HCT116 (cell line): ENCODE measurements at regions of chr4 and their contacts with region 1.

Region 1: GRCh38 chr4:128863312-128864075 is 54.0 kb downstream of the JADE1 start:
- DNase-seq: peak; percentile 42
- ATAC-seq: peak; percentile 92
- H3K4me3 ChIP-seq: no peak overlapping the region
- H3K27ac ChIP-seq: no peak overlapping the region
- H3K4me1 ChIP-seq: no peaks in the 10 kb centered on the region
- H3K27me3 ChIP-seq: no peaks in the 10 kb centered on the region
- CTCF ChIP-seq: peak; percentile 80 to 87 (median 85)
- POLR2A ChIP-seq: no peak
- RAD21 ChIP-seq: peak; percentile 71

Region 2: DNA sequence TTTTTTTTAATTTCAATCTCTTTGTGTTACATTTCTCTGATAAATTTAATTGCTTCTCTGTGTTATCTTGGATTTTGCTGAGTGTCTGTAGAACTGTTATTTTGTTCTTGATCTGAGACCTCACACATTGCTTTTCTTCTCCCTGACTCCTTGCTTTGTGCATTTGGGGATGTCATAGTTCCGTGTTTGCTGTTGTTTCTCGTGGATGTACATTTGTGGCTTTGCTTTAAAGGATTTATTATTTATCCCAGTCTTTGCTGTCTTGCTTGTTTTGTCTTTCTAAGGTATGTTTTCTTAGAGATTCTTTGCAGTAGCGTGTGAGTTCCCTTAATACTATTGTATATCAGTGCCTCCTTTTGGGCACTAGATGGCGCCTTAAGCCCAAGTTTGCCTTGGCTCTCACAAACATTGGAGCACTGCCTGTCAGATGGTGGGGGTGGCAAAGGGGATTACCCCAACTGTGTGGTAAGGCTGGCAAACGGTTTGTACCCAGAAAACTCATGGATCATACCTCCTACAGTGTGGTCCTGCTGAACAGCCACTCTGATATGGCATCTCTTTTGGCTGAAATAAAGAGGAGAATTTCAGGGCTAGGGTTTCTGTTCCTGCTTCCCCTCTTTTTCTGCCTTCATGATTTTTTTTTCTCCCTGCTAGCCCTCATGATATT is 672.2 kb before region 1 on chr4:
- CTCF ChIA-PET with region 1: interaction called, 3 read pairs
- POLR2A ChIA-PET with region 1: no interaction called
- RAD21 ChIA-PET with region 1: no interaction called
- intact Hi-C with region 1: loop called (anchors 1 kb)
- DNase-seq: peak; percentile 37
- ATAC-seq: peak; percentile 97
- H3K4me3 ChIP-seq: no peak overlapping the region
- H3K27ac ChIP-seq: no peak overlapping the region
- H3K4me1 ChIP-seq: no peaks in the 10 kb centered on the region
- H3K27me3 ChIP-seq: no peaks in the 10 kb centered on the region
- CTCF ChIP-seq: peak; percentile 69 to 94 (median 84)
- POLR2A ChIP-seq: no peak
- RAD21 ChIP-seq: peak; percentile 85

Region 3: GRCh38 chr4:128454281-128455075 is 409.0 kb before region 1 on chr4:
- CTCF ChIA-PET with region 1: interaction called, 6 read pairs
- POLR2A ChIA-PET with region 1: no interaction called
- RAD21 ChIA-PET with region 1: no interaction called
- intact Hi-C with region 1: loop called (anchors 1 kb)
- DNase-seq: peak; percentile 75
- ATAC-seq: peak; percentile 100
- H3K4me3 ChIP-seq: no peak overlapping the region
- H3K27ac ChIP-seq: no peak overlapping the region
- H3K4me1 ChIP-seq: no peaks in the 10 kb centered on the region
- H3K27me3 ChIP-seq: no peaks in the 10 kb centered on the region; the same call in 1 of the 2 replicates
- CTCF ChIP-seq: peak; percentile 60 to 84 (median 81); a peak in 5 of 6 replicates
- POLR2A ChIP-seq: no peak
- RAD21 ChIP-seq: peak; percentile 89

Region 4: GRCh38 chr4:128565565-128566186 is 297.8 kb before region 1 on chr4:
- CTCF ChIA-PET with region 1: no interaction called
- POLR2A ChIA-PET with region 1: no interaction called
- RAD21 ChIA-PET with region 1: no interaction called
- intact Hi-C with region 1: loop called (anchors 1 kb)
- DNase-seq: peak; percentile 46
- ATAC-seq: peak; percentile 98
- H3K4me3 ChIP-seq: no peak overlapping the region
- H3K27ac ChIP-seq: no peak overlapping the region
- H3K4me1 ChIP-seq: no peaks in the 10 kb centered on the region
- H3K27me3 ChIP-seq: no peaks in the 10 kb centered on the region
- CTCF ChIP-seq: peak; percentile 78 to 86 (median 79); a peak in 5 of 6 replicates
- POLR2A ChIP-seq: no peak
- RAD21 ChIP-seq: peak; percentile 90

Region 5: GRCh38 chr4:128574706-128575105 is 288.8 kb before region 1 on chr4:
- CTCF ChIA-PET with region 1: interaction called, 4 read pairs
- POLR2A ChIA-PET with region 1: no interaction called
- RAD21 ChIA-PET with region 1: no interaction called
- intact Hi-C with region 1: loop called (anchors 2 kb)
- DNase-seq: peak; percentile 40
- ATAC-seq: peak; percentile 88
- H3K4me3 ChIP-seq: no peak overlapping the region
- H3K27ac ChIP-seq: no peak overlapping the region
- H3K4me1 ChIP-seq: peaks cover 0 to 5% of the 10 kb centered on the region in 2 experiments; a peak in 1 of 4 replicates
- H3K27me3 ChIP-seq: no peaks in the 10 kb centered on the region
- CTCF ChIP-seq: peak; percentile 57 to 78 (median 67)
- POLR2A ChIP-seq: no peak
- RAD21 ChIP-seq: peak; percentile 71

Region 6: GRCh38 chr4:128782076-128782715 is 81.3 kb before region 1 on chr4:
- CTCF ChIA-PET with region 1: no interaction called
- POLR2A ChIA-PET with region 1: no interaction called
- RAD21 ChIA-PET with region 1: no interaction called
- intact Hi-C with region 1: loop called (anchors 1 kb)
- DNase-seq: peak; percentile 18
- ATAC-seq: peak; percentile 87
- H3K4me3 ChIP-seq: no peak overlapping the region
- H3K27ac ChIP-seq: no peak overlapping the region
- H3K4me1 ChIP-seq: no peaks in the 10 kb centered on the region
- H3K27me3 ChIP-seq: no peaks in the 10 kb centered on the region
- CTCF ChIP-seq: peak; percentile 19 to 46 (median 44); a peak in 4 of 6 replicates
- POLR2A ChIP-seq: no peak
- RAD21 ChIP-seq: peak; percentile 73

Region 7: GRCh38 chr4:128809477-128810330 is 53.8 kb before region 1 on chr4 and contains the start of gene JADE1:
- CTCF ChIA-PET with region 1: no interaction called
- POLR2A ChIA-PET with region 1: no interaction called
- RAD21 ChIA-PET with region 1: no interaction called
- intact Hi-C with region 1: loop called (anchors 2 kb)
- DNase-seq: peak; percentile 90
- ATAC-seq: peak; percentile 67
- H3K4me3 ChIP-seq: peak within 1 kb of the TSS; percentile 84 to 92
- H3K27ac ChIP-seq: peak within 1 kb of the TSS; percentile 91
- H3K4me1 ChIP-seq: peaks cover 10 to 27% of the 10 kb centered on the region in 2 experiments; a peak in 3 of 4 replicates
- H3K27me3 ChIP-seq: no peaks in the 10 kb centered on the region
- CTCF ChIP-seq: peak; percentile 49 to 89 (median 57)
- POLR2A ChIP-seq: peak; percentile 56
- RAD21 ChIP-seq: peak; percentile 81
- total RNA-seq, gene JADE1: 26.5 TPM